A673 (cell line): ENCODE measurements at regions of chr5 and their contacts with region 1.

Region 1: DNA sequence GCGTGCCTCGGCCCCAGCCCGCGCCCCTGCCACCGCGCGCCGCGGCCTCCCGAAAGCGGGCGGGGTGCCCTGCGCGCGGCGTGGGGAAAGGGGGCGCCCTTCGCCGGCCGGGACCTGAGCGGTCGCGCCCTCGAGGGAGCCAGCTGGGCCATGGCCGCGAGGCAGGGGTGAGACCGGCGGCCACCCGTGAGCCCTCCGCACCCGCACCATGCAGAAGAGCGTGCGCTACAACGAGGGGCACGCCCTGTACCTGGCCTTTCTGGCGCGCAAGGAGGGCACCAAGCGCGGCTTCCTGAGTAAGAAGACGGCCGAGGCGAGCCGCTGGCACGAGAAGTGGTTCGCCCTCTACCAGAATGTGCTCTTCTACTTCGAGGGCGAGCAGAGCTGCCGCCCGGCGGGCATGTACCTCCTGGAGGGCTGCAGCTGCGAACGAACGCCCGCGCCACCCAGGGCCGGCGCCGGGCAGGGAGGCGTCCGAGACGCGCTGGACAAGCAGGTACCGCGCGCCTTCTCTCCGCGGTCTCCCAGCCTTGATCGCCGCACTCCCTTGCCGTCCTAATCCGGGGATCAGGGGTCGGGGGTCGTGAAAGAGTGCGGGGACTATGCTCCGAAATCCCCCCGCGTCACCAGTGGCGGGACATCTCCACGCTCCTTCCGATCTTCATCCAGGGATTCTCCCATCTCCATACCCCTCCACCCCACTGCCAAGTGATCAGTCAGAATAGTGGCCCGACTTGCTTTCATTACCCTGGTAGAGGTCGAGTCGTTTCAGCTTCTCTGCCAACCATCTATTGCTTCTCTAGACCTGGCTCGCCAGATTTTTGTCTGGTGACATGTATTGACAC is 590 bp downstream of the RASGRF2 start:
- DNase-seq: peak; percentile 56
- H3K4me3 ChIP-seq: peak overlapping the region; percentile 50
- H3K27ac ChIP-seq: no peak overlapping the region
- H3K4me1 ChIP-seq: peaks cover 54% of the 10 kb centered on the region
- H3K27me3 ChIP-seq: peaks cover 6% of the 10 kb centered on the region
- CTCF ChIP-seq: no peak

Region 2: DNA sequence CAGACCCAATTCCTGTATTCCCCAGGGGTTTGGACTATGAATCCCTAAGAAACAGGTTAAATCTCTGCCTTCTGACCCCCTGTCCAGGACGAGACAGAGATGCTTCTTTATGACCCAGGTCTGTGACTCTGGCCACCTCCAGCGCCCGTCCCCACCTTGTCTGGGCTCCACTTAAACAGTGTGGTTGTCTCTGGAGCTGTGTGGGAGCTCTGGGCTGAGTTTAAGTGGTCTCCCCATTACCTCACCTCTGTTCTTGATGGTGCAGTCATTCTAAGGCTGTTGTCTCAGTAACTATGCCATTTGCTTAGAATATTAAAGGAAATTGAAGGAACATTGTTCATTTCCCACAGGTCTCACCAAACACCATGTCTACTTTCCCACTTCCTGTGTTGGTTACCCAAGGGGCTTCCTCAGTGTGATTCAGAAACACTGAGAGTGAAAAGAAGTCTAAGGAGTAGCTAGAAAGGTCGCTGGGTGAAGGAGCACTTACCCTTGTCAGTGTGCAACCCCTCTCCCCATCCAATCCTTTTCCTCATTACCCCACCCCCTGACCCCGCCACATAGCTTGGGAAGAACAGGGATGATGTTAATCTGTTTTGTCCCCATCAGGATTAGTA is 144.6 kb after region 1 on chr5:
- CTCF ChIA-PET with region 1: no interaction called
- POLR2A ChIA-PET with region 1: no interaction called
- intact Hi-C with region 1: loop called (anchors 5 kb)
- DNase-seq: no peak
- H3K4me3 ChIP-seq: no peak overlapping the region
- H3K27ac ChIP-seq: no peak overlapping the region
- H3K4me1 ChIP-seq: no peaks in the 10 kb centered on the region
- H3K27me3 ChIP-seq: no peaks in the 10 kb centered on the region
- CTCF ChIP-seq: no peak

Region 3: GRCh38 chr5:81165493-81166119 is 204.9 kb after region 1 on chr5:
- CTCF ChIA-PET with region 1: no interaction called
- POLR2A ChIA-PET with region 1: no interaction called
- intact Hi-C with region 1: loop called (anchors 10 kb)
- DNase-seq: peak; percentile 77
- H3K4me3 ChIP-seq: no peak overlapping the region
- H3K27ac ChIP-seq: no peak overlapping the region
- H3K4me1 ChIP-seq: no peaks in the 10 kb centered on the region
- H3K27me3 ChIP-seq: no peaks in the 10 kb centered on the region
- CTCF ChIP-seq: peak; percentile 90